ENCODE measurements at regions of chr15 and their contacts with region 1.

Region 1: GRCh38 chr15:58469432-58470353 is 37.9 kb downstream of the LIPC start:
- DNase-seq: peak; percentile 96
- H3K4me3 ChIP-seq: no peak overlapping the region
- H3K27ac ChIP-seq: peak overlapping the region; percentile 90
- H3K4me1 ChIP-seq: peaks cover 46% of the 10 kb centered on the region
- H3K27me3 ChIP-seq: no peaks in the 10 kb centered on the region
- CTCF ChIP-seq: no peak

Region 2: DNA sequence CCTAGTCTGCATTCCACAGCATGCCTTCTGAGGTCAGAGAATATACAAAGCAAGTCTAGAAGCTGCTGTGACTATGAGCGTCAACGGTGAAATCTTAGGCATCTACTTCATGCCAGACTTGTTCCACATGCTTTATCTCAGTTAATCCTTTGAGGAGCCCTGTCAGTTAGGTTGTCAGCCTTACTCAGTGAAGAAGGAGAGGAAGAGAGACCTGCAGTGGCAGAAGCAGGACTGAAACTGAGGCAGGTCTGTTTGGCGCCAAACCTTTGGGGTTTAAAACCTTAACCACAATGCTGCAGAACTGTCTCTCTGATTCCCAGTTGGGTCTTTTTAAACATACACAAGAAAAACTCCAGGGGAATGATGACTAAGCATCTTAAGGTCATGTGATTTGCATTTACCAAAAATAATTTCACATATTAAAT is 176.9 kb before region 1 on chr15:
- CTCF ChIA-PET with region 1: no interaction called
- dilution Hi-C with region 1: no loop called
- in situ Hi-C with region 1: no loop called
- intact Hi-C with region 1: no loop called
- DNase-seq: no peak
- H3K4me3 ChIP-seq: no peak overlapping the region
- H3K27ac ChIP-seq: no peak overlapping the region
- H3K4me1 ChIP-seq: no peaks in the 10 kb centered on the region
- H3K27me3 ChIP-seq: no peaks in the 10 kb centered on the region
- CTCF ChIP-seq: no peak

Region 3: GRCh38 chr15:58331903-58332675 is 137.6 kb before region 1 on chr15:
- CTCF ChIA-PET with region 1: no interaction called
- dilution Hi-C with region 1: no loop called
- in situ Hi-C with region 1: no loop called
- intact Hi-C with region 1: loop called (anchors 1 kb)
- DNase-seq: peak; percentile 98
- H3K4me3 ChIP-seq: no peak overlapping the region
- H3K27ac ChIP-seq: peak overlapping the region; percentile 73
- H3K4me1 ChIP-seq: peaks cover 22% of the 10 kb centered on the region
- H3K27me3 ChIP-seq: no peaks in the 10 kb centered on the region
- CTCF ChIP-seq: no peak

Region 4: DNA sequence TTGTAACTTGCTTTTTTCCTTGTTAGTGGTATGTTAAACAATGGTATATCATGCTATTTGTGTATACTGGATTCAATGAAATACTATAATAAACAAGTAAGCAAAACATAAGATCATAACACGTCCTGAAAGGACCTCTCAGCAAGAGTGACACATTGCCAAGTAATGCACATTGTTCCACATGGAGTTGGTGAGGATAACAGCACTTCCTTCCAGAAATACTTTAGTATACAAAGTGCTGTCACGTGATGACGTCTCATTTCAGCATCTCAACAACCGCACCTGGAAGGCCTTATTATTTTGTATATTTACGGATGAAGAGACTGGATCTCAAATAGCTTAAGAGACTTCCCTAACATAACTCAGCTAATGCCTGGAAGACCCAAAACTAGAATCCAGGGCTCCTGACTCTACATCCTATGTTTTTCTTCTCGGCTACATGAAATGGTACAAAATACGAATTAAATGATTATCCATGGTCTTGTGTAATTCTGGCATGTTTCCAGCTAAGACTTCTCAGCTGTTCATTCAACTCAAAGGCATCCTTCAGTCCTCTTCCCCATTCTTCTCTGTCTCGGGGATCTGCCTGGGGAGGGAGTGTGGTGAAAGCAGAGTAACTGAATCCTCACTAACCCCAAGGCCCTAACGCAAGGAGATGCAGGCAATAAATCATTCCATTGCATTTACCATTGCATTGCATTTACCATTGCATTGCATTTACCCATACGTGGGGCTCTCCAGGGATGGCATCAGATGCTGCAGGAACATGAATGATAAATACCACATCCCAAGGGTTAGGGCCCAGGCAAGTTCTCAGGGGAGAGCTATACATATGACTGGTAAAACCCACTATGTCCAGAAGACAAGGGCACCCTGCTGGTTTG is 41.3 kb after region 1 on chr15:
- CTCF ChIA-PET with region 1: no interaction called
- dilution Hi-C with region 1: no loop called
- in situ Hi-C with region 1: no loop called
- intact Hi-C with region 1: loop called (anchors 5 kb)
- DNase-seq: no peak
- H3K4me3 ChIP-seq: no peak overlapping the region
- H3K27ac ChIP-seq: no peak overlapping the region
- H3K4me1 ChIP-seq: peaks cover 15% of the 10 kb centered on the region
- H3K27me3 ChIP-seq: no peaks in the 10 kb centered on the region
- CTCF ChIP-seq: no peak